ENCODE measurements at regions of chr15 and their contacts with region 1.

Region 1: GRCh38 chr15:78396976-78397375 is 41.0 kb upstream of the IREB2 start:
- DNase-seq: peak in 1 of 2 experiments; percentile 62
- H3K4me3 ChIP-seq: no peak overlapping the region
- H3K4me3 Mint-ChIP-seq: no peak overlapping the region
- H3K27ac Mint-ChIP-seq: no peak overlapping the region
- H3K4me1 ChIP-seq: no peaks in the 10 kb centered on the region
- H3K4me1 Mint-ChIP-seq: no peaks in the 10 kb centered on the region
- H3K27me3 ChIP-seq: no peaks in the 10 kb centered on the region
- H3K27me3 Mint-ChIP-seq: no peaks in the 10 kb centered on the region
- CTCF ChIP-seq: peak in 1 of 2 experiments; percentile 49

Region 2: GRCh38 chr15:78540141-78540928 is 143.4 kb after region 1 on chr15 and contains the start of gene PSMA4:
- CTCF ChIA-PET with region 1: no interaction called
- POLR2A ChIA-PET with region 1: interaction called, 12 read pairs
- intact Hi-C with region 1: no loop called
- DNase-seq: peak; percentile 86 to 90
- H3K4me3 ChIP-seq: peak within 1 kb of the TSS; percentile 75
- H3K4me3 Mint-ChIP-seq: peak within 1 kb of the TSS; percentile 91
- H3K27ac Mint-ChIP-seq: peak within 1 kb of the TSS; percentile 96
- H3K4me1 ChIP-seq: no peaks in the 10 kb centered on the region
- H3K4me1 Mint-ChIP-seq: peaks cover 14% of the 10 kb centered on the region
- H3K27me3 ChIP-seq: no peaks in the 10 kb centered on the region
- H3K27me3 Mint-ChIP-seq: no peaks in the 10 kb centered on the region
- CTCF ChIP-seq: no peak
- total RNA-seq, gene PSMA4: 276 and 285 TPM in 2 replicates

Region 3: DNA sequence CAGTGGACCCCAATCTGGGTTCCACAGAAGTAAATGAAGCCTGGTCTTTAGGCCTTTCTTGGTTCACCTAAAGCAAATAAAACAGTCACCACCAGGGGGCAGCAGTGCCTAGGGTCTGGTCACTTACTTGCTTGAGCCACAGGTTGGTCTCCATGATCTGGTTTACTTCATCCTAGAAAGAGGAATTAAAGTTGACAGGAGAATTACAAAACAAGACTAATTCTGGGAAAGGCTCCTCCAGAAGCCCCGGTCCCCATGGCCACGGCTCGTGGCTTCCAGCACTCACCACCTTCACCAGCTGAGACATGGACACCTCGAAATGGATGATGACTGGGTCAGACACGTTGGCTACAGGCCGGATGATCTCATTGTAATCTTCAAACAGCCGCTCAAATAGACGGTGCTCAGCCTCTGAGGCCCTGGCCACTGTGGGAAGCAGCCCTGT is 221.5 kb after region 1 on chr15:
- CTCF ChIA-PET with region 1: interaction called, 10 read pairs
- POLR2A ChIA-PET with region 1: no interaction called
- intact Hi-C with region 1: no loop called
- DNase-seq: peak; percentile 80 to 87
- H3K4me3 ChIP-seq: no peak overlapping the region
- H3K4me3 Mint-ChIP-seq: no peak overlapping the region
- H3K27ac Mint-ChIP-seq: no peak overlapping the region
- H3K4me1 ChIP-seq: no peaks in the 10 kb centered on the region
- H3K4me1 Mint-ChIP-seq: no peaks in the 10 kb centered on the region
- H3K27me3 ChIP-seq: no peaks in the 10 kb centered on the region
- H3K27me3 Mint-ChIP-seq: peaks cover 4% of the 10 kb centered on the region
- CTCF ChIP-seq: peak; percentile 66 to 79

Measured in Caco-2 (cell line).